ENCODE measurements at regions of chr15 and their contacts with region 1.

Region 1: GRCh38 chr15:47711654-47712053 is 5.7 kb upstream of the SEMA6D start:
- DNase-seq: peak; percentile 5
- H3K4me3 ChIP-seq: no peak overlapping the region
- H3K27ac ChIP-seq: no peak overlapping the region
- H3K4me1 ChIP-seq: no peaks in the 10 kb centered on the region
- H3K27me3 ChIP-seq: no peaks in the 10 kb centered on the region
- CTCF ChIP-seq: peak; percentile 58 to 72

Region 2: GRCh38 chr15:47384341-47384740 is 327.3 kb before region 1 on chr15:
- CTCF ChIA-PET with region 1: no interaction called
- dilution Hi-C with region 1: no loop called
- in situ Hi-C with region 1: no loop called
- intact Hi-C with region 1: no loop called
- DNase-seq: peak; percentile 87
- H3K4me3 ChIP-seq: no peak overlapping the region
- H3K27ac ChIP-seq: peak overlapping the region; percentile 57
- H3K4me1 ChIP-seq: peaks cover 21% of the 10 kb centered on the region
- H3K27me3 ChIP-seq: no peaks in the 10 kb centered on the region
- CTCF ChIP-seq: no peak

Region 3: GRCh38 chr15:47473832-47474231 is 237.8 kb before region 1 on chr15:
- CTCF ChIA-PET with region 1: no interaction called
- dilution Hi-C with region 1: no loop called
- in situ Hi-C with region 1: no loop called
- intact Hi-C with region 1: loop called (anchors 2 kb)
- DNase-seq: no peak
- H3K4me3 ChIP-seq: no peak overlapping the region
- H3K27ac ChIP-seq: no peak overlapping the region
- H3K4me1 ChIP-seq: no peaks in the 10 kb centered on the region
- H3K27me3 ChIP-seq: no peaks in the 10 kb centered on the region
- CTCF ChIP-seq: no peak

Region 4: DNA sequence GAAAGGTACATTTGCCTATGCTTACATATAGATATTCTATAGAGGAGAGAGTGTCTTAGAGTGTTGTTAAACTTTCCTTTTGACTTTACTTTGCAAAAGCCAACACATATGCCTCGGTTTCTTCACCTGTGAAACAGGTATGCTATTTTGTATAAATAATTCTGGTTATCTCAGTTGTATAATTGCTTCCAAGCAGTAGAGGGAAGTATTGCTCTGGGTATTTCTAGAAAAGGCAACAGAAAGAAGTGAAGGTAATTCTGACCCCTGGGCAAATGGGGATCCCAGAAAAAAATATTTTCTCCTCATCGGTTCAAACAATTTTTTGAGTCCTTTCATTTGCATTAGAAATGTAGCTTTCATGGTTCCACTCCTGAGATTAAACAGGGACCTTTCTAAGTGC is 210.8 kb before region 1 on chr15:
- CTCF ChIA-PET with region 1: no interaction called
- dilution Hi-C with region 1: no loop called
- in situ Hi-C with region 1: no loop called
- intact Hi-C with region 1: loop called (anchors 1 kb)
- DNase-seq: no peak
- H3K4me3 ChIP-seq: no peak overlapping the region
- H3K27ac ChIP-seq: no peak overlapping the region
- H3K4me1 ChIP-seq: no peaks in the 10 kb centered on the region
- H3K27me3 ChIP-seq: no peaks in the 10 kb centered on the region
- CTCF ChIP-seq: peak in 1 of 2 donors; percentile 7

Region 5: GRCh38 chr15:47917881-47918280 is 206.2 kb after region 1 on chr15:
- CTCF ChIA-PET with region 1: no interaction called
- dilution Hi-C with region 1: no loop called
- in situ Hi-C with region 1: no loop called
- intact Hi-C with region 1: no loop called
- DNase-seq: no peak
- H3K4me3 ChIP-seq: no peak overlapping the region
- H3K27ac ChIP-seq: no peak overlapping the region
- H3K4me1 ChIP-seq: no peaks in the 10 kb centered on the region
- H3K27me3 ChIP-seq: no peaks in the 10 kb centered on the region
- CTCF ChIP-seq: no peak

Region 6: DNA sequence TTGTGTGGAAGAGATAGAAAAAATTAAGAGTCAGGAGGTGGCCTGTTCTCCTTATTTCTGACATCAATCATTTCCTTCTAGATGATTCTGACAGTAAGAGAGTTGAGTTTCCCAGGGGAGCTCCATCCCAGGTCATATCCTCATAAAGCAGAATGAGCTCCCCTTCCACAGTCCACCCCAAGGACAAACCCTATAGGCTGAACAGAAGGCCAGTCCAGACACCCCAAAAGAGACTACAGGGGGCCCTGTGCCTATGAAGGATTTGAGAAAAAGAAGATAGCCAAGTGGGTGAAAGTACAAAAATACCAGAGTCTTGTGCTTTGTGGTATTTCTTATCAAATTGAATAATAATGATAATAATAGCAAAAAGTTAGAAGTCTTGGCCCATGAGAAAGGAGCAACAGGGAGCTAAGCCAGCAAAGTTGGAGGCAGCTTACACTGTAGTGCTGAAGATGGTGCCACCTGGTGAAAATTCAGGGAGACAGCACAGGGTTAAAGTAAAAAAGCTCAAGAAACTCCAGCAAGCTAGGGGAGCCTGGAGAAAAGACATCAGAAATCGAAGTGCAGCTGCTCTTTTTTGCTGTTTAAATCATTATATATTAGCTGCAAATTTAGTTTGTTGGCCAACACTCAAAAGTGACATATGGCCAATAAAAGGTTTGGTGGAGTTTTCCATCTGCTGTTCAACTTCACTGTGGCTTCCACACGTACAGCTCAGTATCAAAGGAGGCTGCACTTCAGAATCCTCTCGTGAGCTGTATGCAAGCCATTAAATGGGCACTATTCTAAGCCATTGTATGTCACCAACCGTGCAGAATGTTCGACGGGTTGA is 373.3 kb after region 1 on chr15:
- CTCF ChIA-PET with region 1: no interaction called
- dilution Hi-C with region 1: no loop called
- in situ Hi-C with region 1: no loop called
- intact Hi-C with region 1: loop called (anchors 2 kb)
- DNase-seq: peak; percentile 6
- H3K4me3 ChIP-seq: no peak overlapping the region
- H3K27ac ChIP-seq: no peak overlapping the region
- H3K4me1 ChIP-seq: no peaks in the 10 kb centered on the region
- H3K27me3 ChIP-seq: no peaks in the 10 kb centered on the region
- CTCF ChIP-seq: peak; percentile 39 to 73

Measured in mammary epithelial cell (primary cell).